CD4-positive, alpha-beta T cell (primary cell): ENCODE measurements at regions of chr20 and their contacts with region 1.

Region 1: GRCh38 chr20:59948828-59949720 is 8.9 kb downstream of the FAM217B start:
- DNase-seq: peak in 6 of 14 experiments; percentile 25 to 81 (median 63)
- ATAC-seq: peak; percentile 94
- H3K4me3 ChIP-seq: peak overlapping the region; percentile 8
- H3K4me3 Mint-ChIP-seq: peak overlapping the region; percentile 62
- H3K27ac ChIP-seq: peak overlapping the region; percentile 37 to 63
- H3K27ac Mint-ChIP-seq: peak overlapping the region; percentile 86
- H3K4me1 ChIP-seq: no peaks in the 10 kb centered on the region
- H3K4me1 Mint-ChIP-seq: peaks cover 21% of the 10 kb centered on the region
- H3K27me3 ChIP-seq: no peaks in the 10 kb centered on the region
- H3K27me3 Mint-ChIP-seq: no peaks in the 10 kb centered on the region
- CTCF ChIP-seq: peak; percentile 76

Region 2: DNA sequence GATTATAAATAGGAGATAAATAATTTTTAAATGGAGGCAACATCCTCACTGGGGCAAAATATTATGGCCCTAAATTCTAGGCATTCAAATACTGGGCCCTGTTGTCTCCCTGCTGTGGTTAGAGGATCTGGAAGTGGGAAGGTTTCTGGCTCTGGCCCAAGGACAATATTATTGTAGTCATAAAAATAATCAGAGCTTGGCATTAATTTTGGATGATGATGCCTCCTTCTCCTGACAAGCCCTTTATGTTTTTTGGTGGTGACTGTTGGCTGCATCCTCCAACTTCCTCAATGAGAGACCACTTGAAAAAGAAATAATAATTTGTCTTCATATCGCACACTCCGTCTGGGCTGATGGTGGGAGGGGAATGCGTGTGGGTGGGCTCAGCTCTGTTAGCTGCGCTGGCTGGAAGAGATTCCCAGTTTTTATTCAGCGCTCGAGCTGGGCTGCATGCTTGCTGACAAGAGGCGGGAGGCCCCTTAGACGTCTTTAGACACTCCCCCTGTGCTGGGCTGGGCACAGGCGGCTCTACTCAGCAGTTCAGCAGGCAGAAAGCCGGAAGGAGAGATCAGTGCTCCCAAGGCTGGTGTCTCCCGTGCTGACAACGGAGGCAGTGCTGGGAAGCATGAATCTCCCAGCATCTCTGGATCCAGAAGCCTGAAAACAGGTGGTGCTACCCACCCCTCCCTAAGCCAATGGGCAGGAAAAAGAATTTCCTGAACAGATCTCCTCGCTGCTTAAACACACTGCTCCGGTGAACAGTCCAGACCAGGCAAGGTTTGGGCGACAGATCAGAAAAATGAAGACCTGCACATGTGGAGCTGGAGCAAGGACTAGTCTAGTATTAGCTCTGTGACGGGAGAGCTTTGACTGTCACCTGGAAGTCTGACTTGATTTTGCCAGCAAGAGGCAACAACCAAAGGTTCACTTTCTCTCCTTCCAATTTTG is 113.4 kb before region 1 on chr20:
- CTCF ChIA-PET with region 1: no interaction called
- POLR2A ChIA-PET with region 1: no interaction called
- intact Hi-C with region 1: no loop called
- DNase-seq: no peak
- ATAC-seq: no peak
- H3K4me3 ChIP-seq: no peak overlapping the region
- H3K4me3 Mint-ChIP-seq: no peak overlapping the region
- H3K27ac ChIP-seq: no peak overlapping the region
- H3K27ac Mint-ChIP-seq: no peak overlapping the region
- H3K4me1 ChIP-seq: no peaks in the 10 kb centered on the region
- H3K4me1 Mint-ChIP-seq: no peaks in the 10 kb centered on the region
- H3K27me3 ChIP-seq: peaks cover 10 to 41% of the 10 kb centered on the region in 2 experiments
- H3K27me3 Mint-ChIP-seq: peaks cover 53% of the 10 kb centered on the region
- CTCF ChIP-seq: no peak

Region 3: GRCh38 chr20:59933849-59934596 is 15.1 kb before region 1 on chr20:
- CTCF ChIA-PET with region 1: interaction called, 31 read pairs
- POLR2A ChIA-PET with region 1: interaction called, 33 read pairs
- intact Hi-C with region 1: no loop called
- DNase-seq: peak; percentile 62 to 90 (median 75)
- ATAC-seq: peak; percentile 71
- H3K4me3 ChIP-seq: peak overlapping the region; percentile 83
- H3K4me3 Mint-ChIP-seq: peak overlapping the region; percentile 86
- H3K27ac ChIP-seq: peak overlapping the region in 1 of 2 donors; percentile 27
- H3K27ac Mint-ChIP-seq: peak overlapping the region; percentile 67
- H3K4me1 ChIP-seq: peaks cover 25% of the 10 kb centered on the region
- H3K4me1 Mint-ChIP-seq: peaks cover 44% of the 10 kb centered on the region
- H3K27me3 ChIP-seq: no peaks in the 10 kb centered on the region
- H3K27me3 Mint-ChIP-seq: no peaks in the 10 kb centered on the region
- CTCF ChIP-seq: peak; percentile 92

Region 4: DNA sequence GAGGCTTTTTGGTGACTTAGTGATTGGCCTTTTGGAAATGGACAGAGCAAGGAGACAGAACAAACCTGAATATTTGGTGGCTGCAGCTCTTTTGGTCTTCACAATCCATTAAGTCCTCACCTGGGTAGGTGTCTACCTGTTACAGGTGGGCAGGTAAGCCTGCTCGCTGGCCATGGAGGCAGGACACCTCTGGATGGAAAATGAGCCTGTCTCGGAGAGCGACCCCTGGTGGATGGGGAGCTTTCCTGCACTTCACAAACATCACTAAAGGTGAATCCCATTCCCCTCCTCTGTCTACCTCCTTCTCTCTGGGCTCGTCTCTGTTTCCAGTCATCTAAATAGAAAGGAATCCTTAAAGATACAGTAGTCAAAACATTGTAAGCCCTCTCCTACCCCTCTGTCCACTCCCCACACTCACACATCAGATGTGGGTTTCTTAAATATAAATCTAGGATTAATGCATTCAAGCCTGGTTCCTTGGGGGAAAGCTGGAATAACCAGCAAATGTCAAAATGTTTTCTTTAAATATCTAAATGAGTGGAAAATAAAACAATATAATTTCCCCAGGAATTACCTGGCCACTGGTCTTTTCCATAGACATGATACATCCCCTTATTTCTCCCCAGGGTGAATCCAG is 314.0 kb after region 1 on chr20:
- CTCF ChIA-PET with region 1: interaction called, 4 read pairs
- POLR2A ChIA-PET with region 1: no interaction called
- intact Hi-C with region 1: loop called in 1 of 2 experiments (anchors 1 kb)
- DNase-seq: peak; percentile 22 to 74 (median 42)
- ATAC-seq: peak; percentile 52
- H3K4me3 ChIP-seq: no peak overlapping the region
- H3K4me3 Mint-ChIP-seq: no peak overlapping the region
- H3K27ac ChIP-seq: no peak overlapping the region
- H3K27ac Mint-ChIP-seq: no peak overlapping the region
- H3K4me1 ChIP-seq: peaks cover 8% of the 10 kb centered on the region
- H3K4me1 Mint-ChIP-seq: peaks cover 29% of the 10 kb centered on the region
- H3K27me3 ChIP-seq: no peaks in the 10 kb centered on the region
- H3K27me3 Mint-ChIP-seq: no peaks in the 10 kb centered on the region
- CTCF ChIP-seq: peak; percentile 77

Region 5: GRCh38 chr20:61120595-61121515 is 1171.8 kb after region 1 on chr20:
- CTCF ChIA-PET with region 1: no interaction called
- POLR2A ChIA-PET with region 1: no interaction called
- intact Hi-C with region 1: loop called (anchors 1 to 5 kb)
- DNase-seq: peak in 6 of 14 experiments; percentile 6 to 58 (median 30)
- ATAC-seq: peak; percentile 56
- H3K4me3 ChIP-seq: no peak overlapping the region
- H3K4me3 Mint-ChIP-seq: no peak overlapping the region
- H3K27ac ChIP-seq: no peak overlapping the region
- H3K27ac Mint-ChIP-seq: no peak overlapping the region
- H3K4me1 ChIP-seq: no peaks in the 10 kb centered on the region
- H3K4me1 Mint-ChIP-seq: no peaks in the 10 kb centered on the region
- H3K27me3 ChIP-seq: peaks cover 0 to 2% of the 10 kb centered on the region in 2 experiments
- H3K27me3 Mint-ChIP-seq: peaks cover 5% of the 10 kb centered on the region
- CTCF ChIP-seq: peak; percentile 30

Region 6: GRCh38 chr20:61234803-61235113 is 1285.7 kb after region 1 on chr20:
- CTCF ChIA-PET with region 1: no interaction called
- POLR2A ChIA-PET with region 1: no interaction called
- intact Hi-C with region 1: loop called (anchors 1 to 5 kb)
- DNase-seq: no peak
- ATAC-seq: no peak
- H3K4me3 ChIP-seq: no peak overlapping the region
- H3K4me3 Mint-ChIP-seq: no peak overlapping the region
- H3K27ac ChIP-seq: no peak overlapping the region
- H3K27ac Mint-ChIP-seq: no peak overlapping the region
- H3K4me1 ChIP-seq: no peaks in the 10 kb centered on the region
- H3K4me1 Mint-ChIP-seq: no peaks in the 10 kb centered on the region
- H3K27me3 ChIP-seq: no peaks in the 10 kb centered on the region
- H3K27me3 Mint-ChIP-seq: peaks cover 11% of the 10 kb centered on the region
- CTCF ChIP-seq: no peak

Region 7: GRCh38 chr20:61886721-61887594 is 1937.9 kb after region 1 on chr20:
- CTCF ChIA-PET with region 1: no interaction called
- POLR2A ChIA-PET with region 1: no interaction called
- intact Hi-C with region 1: loop called (anchors 5 kb)
- DNase-seq: peak in 12 of 14 experiments; percentile 4 to 51 (median 17)
- ATAC-seq: peak; percentile 44
- H3K4me3 ChIP-seq: no peak overlapping the region
- H3K4me3 Mint-ChIP-seq: no peak overlapping the region
- H3K27ac ChIP-seq: no peak overlapping the region
- H3K27ac Mint-ChIP-seq: no peak overlapping the region
- H3K4me1 ChIP-seq: no peaks in the 10 kb centered on the region
- H3K4me1 Mint-ChIP-seq: peaks cover 4% of the 10 kb centered on the region
- H3K27me3 ChIP-seq: peaks cover 0 to 4% of the 10 kb centered on the region in 2 experiments
- H3K27me3 Mint-ChIP-seq: no peaks in the 10 kb centered on the region
- CTCF ChIP-seq: peak; percentile 72